Calu3 (cell line): ENCODE measurements at regions of chr6 and their contacts with region 1.

Region 1: GRCh38 chr6:10429638-10430427 is 15.0 kb upstream of the TFAP2A start:
- DNase-seq: peak; percentile 51
- H3K4me3 Mint-ChIP-seq: peak overlapping the region; percentile 42
- H3K27ac Mint-ChIP-seq: peak overlapping the region; percentile 85
- H3K4me1 Mint-ChIP-seq: peaks cover 30% of the 10 kb centered on the region
- H3K27me3 Mint-ChIP-seq: no peaks in the 10 kb centered on the region
- CTCF ChIP-seq: no peak

Region 2: DNA sequence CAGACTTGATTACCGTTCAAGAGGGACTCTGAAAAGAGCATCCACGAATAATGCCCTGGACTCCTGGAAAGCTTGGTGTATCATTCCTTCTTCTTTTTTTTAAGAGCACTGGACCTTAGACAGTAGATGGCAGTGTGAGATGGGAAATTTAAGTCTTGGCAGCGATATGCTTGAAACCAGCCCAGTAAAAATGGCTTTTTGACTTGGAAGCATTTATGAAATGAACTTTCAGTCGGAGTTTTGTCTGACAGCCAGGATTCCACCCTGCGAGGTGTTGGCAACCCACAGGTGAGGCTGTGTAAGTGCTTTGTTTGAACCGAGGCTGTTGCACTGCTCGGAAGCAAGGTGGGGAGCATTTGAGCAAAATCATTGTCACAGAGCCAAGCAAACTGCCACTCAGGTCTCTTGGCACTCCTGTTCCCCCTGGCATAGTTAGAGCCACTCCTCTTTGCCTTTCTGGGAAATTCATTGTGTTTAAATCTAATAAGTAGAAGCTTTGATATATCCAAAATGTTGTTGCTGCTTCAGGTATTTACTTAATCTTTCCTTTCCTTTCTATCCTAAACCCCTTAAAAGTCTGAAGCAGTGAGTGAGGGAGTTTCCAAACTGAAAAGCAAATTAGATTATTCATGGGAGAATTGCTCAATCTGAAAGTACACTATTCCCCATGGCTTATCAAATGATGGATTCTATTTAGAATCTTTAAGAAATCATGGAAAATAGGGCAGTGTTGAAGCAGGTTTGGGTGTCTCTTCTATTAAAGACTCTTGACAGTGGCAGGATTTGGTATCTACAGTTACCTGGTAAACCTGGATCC is 1721.7 kb before region 1 on chr6:
- CTCF ChIA-PET with region 1: interaction called, 3 read pairs
- intact Hi-C with region 1: loop called (anchors 2 kb)
- DNase-seq: peak; percentile 13
- H3K4me3 Mint-ChIP-seq: peak overlapping the region; percentile 21
- H3K27ac Mint-ChIP-seq: no peak overlapping the region
- H3K4me1 Mint-ChIP-seq: peaks cover 6% of the 10 kb centered on the region
- H3K27me3 Mint-ChIP-seq: no peaks in the 10 kb centered on the region
- CTCF ChIP-seq: no peak

Region 3: DNA sequence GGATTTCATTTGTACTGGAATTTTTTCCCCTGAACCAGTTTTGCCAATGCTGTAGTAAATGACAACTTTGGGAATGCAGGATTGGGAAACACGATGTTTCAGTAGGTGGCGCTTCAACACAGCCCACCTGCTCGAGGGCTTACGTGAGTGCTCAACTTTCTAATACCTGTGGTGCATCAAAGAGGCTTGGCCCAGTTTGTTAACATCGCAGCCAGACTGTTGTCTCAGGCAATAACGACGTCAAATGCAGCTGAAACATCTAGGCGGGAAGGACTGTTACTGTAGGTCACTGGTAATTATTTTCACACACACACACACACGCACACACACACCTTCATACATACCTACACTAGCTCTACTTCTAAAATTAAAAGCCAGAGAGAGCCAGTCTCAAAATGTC is 1179.0 kb before region 1 on chr6:
- CTCF ChIA-PET with region 1: interaction called, 5 read pairs
- intact Hi-C with region 1: loop called (anchors 2 kb)
- DNase-seq: peak; percentile 55
- H3K4me3 Mint-ChIP-seq: no peak overlapping the region
- H3K27ac Mint-ChIP-seq: no peak overlapping the region
- H3K4me1 Mint-ChIP-seq: peaks cover 14% of the 10 kb centered on the region
- H3K27me3 Mint-ChIP-seq: no peaks in the 10 kb centered on the region
- CTCF ChIP-seq: peak; percentile 30

Region 4: GRCh38 chr6:9405369-9405768 is 1024.5 kb before region 1 on chr6:
- CTCF ChIA-PET with region 1: no interaction called
- intact Hi-C with region 1: loop called (anchors 5 kb)
- DNase-seq: peak; percentile 37
- H3K4me3 Mint-ChIP-seq: peak overlapping the region; percentile 48
- H3K27ac Mint-ChIP-seq: peak overlapping the region; percentile 89
- H3K4me1 Mint-ChIP-seq: peaks cover 36% of the 10 kb centered on the region
- H3K27me3 Mint-ChIP-seq: no peaks in the 10 kb centered on the region
- CTCF ChIP-seq: no peak

Region 5: GRCh38 chr6:9537381-9537780 is 892.5 kb before region 1 on chr6:
- CTCF ChIA-PET with region 1: interaction called, 3 read pairs
- intact Hi-C with region 1: loop called (anchors 5 kb)
- DNase-seq: no peak
- H3K4me3 Mint-ChIP-seq: no peak overlapping the region
- H3K27ac Mint-ChIP-seq: peak overlapping the region; percentile 83
- H3K4me1 Mint-ChIP-seq: peaks cover 10% of the 10 kb centered on the region
- H3K27me3 Mint-ChIP-seq: no peaks in the 10 kb centered on the region
- CTCF ChIP-seq: no peak

Region 6: DNA sequence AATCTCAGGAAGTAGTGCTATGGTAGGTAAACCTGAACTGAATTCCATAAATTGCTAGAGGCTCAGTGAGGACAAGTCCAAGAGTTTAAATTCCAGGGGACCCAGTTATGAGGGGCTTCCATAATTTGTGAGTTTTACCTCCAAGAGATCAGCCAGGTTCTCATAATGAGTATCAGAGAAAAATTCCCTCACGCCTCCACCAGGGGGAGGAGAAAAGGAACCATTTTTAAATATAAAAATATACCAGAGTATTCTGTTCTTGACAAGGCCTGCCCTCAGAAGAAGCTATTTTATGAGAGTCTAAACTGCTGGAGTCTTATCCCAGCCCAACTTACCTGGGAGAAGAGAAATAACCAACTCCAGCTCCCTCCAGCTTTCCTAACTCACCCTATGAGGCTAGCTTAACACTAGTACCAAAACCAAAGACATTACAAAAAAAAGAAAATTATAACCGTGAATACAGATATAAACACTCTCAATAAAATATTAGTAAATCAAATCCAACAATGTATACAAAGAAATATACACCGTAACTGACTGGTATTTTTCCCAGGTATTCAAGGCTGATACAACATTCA is 173.6 kb before region 1 on chr6:
- CTCF ChIA-PET with region 1: no interaction called
- intact Hi-C with region 1: no loop called
- DNase-seq: peak; percentile 16
- H3K4me3 Mint-ChIP-seq: no peak overlapping the region
- H3K27ac Mint-ChIP-seq: no peak overlapping the region
- H3K4me1 Mint-ChIP-seq: no peaks in the 10 kb centered on the region
- H3K27me3 Mint-ChIP-seq: no peaks in the 10 kb centered on the region
- CTCF ChIP-seq: no peak

Region 7: DNA sequence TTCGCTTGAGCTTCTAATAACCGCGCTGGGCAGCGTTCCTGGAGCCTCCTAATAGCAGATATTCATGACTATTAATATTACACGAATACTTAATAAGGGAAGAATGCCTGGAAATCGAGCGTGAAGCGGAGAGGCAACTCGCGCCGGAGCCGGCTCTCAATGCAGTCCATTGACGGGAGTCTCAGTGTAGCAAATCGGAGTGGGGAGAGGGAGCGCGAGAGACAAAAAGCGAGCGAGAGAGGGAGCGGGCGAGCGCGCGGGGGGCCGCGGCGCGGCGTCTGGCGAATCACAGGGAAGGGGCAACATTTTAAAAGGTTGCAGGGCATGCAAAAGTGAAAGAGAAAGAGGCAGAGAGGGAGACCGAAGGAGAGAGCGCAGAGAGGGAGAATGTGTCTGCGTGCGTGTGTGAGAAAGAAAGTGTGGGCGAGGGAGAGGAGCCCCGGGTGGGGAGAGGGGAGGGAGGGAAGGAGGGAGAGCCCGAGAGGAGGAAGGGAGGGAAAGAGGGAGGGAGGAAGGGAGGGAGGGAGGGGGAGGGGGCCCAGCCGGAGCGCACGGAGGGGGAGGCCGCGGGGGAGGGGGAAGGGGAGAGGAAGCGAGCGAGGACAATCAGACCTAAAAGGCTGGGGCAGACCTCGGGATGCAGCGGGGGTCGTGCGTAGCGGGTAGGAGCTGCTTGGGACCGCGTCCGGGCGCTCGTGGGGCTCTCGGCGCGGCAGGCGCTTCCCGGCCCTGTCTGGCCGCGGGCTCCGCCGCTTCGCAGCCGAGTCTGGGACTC is 17.7 kb before region 1 on chr6:
- CTCF ChIA-PET with region 1: interaction called, 32 read pairs
- intact Hi-C with region 1: no loop called
- DNase-seq: peak; percentile 75
- H3K4me3 Mint-ChIP-seq: peak overlapping the region; percentile 92
- H3K27ac Mint-ChIP-seq: peak overlapping the region; percentile 99
- H3K4me1 Mint-ChIP-seq: peaks cover 1% of the 10 kb centered on the region
- H3K27me3 Mint-ChIP-seq: no peaks in the 10 kb centered on the region
- CTCF ChIP-seq: no peak

Region 8: DNA sequence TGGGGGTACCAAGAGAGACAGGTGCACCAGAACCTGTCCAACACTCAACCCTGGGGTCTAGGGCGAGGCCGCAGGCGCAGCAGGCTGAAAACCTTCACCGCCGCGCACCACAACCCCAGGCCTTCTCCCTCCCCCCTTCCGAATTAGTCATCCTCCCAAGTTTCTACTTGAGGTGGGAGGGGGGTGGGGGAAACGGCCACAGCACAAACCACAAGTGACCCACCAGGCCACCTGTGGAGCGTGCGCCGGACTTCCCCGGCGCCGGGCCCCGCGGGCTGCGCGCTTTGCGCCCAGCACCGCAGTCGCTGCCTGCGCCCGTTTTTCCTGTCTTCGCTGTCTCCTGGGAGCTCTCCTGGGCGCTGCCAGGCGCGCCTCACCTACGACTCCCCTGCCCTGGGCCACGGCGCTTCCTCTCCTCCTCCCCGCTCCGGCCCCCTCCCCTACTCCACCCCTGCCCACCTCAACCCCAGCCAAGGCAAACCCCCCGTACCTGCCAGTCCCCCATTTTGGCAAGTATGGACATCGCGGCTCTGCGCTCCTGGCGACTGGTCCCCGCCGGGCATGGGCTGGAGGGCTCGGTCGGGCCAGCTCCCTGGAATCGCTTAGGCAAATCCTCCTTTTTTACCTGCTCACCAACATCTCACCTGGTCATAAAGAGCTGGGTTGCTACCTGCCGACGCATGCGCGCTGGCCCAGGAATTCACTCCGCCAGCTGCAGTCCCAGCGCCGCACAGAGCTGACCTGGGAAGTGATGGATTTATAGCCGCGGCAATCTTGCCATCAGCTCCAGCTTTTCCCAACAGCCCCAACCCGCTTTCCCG is 10.7 kb before region 1 on chr6:
- CTCF ChIA-PET with region 1: interaction called, 32 read pairs
- intact Hi-C with region 1: no loop called
- DNase-seq: peak; percentile 77
- H3K4me3 Mint-ChIP-seq: peak overlapping the region; percentile 92
- H3K27ac Mint-ChIP-seq: peak overlapping the region; percentile 94
- H3K4me1 Mint-ChIP-seq: peaks cover 20% of the 10 kb centered on the region
- H3K27me3 Mint-ChIP-seq: no peaks in the 10 kb centered on the region
- CTCF ChIP-seq: no peak